Posterior vena cava (tissue), 2 donors: ENCODE measurements at regions of chr5 and their contacts with region 1.

Region 1: DNA sequence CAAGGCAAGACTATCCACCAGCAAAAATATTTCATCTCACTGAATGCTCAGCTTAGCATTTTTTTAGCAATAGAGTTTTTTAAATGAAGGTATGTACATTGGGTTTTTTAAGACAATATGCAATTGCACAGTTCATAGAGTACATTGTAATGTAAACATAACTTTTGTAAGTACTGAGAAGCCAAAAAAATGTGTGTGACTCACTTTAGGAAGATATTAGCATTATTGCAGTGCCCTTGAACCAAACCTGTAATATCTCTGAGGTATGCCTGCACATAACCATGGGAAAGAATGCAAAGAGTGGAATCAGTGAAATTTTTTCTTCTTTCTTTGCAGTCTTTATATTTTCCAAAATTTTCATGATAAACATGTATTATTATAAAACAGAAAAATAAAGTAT is 1533.3 kb upstream of the WWC1 start:
- DNase-seq: no peak

Region 2: DNA sequence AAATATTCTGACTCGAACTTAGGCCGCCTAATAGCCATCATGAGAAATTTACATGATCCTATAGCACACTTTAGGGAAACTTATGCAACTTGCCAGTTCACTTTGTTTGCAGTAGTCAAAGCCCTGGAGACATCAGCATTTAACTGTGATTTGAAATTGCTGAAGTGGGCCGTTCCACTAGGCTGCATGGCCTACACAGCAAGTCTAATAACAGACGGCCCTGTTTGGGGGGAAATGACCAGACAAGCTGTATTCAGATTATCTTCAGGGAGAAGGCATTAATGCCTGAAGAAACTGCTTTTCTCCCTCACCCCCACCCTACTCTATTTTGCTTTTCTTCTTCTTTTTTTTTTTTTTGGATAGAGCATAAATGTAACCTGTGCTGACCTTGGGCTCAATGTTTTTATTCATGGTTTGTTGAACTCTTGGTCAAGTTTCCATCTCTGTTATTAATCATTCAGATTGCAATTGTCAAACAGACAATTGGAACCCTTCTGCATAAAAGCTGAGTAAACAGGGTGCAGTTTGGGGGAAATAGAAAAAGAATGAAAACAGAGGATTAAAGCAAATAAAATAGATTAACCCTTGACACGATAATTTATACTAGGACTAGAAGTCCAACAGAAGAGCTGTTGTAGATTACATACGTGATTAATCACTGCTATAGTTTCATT is 394.9 kb before region 1 on chr5:
- intact Hi-C with region 1: loop called in 1 of 2 experiments (anchors 5 kb)
- DNase-seq: no peak

Region 3: DNA sequence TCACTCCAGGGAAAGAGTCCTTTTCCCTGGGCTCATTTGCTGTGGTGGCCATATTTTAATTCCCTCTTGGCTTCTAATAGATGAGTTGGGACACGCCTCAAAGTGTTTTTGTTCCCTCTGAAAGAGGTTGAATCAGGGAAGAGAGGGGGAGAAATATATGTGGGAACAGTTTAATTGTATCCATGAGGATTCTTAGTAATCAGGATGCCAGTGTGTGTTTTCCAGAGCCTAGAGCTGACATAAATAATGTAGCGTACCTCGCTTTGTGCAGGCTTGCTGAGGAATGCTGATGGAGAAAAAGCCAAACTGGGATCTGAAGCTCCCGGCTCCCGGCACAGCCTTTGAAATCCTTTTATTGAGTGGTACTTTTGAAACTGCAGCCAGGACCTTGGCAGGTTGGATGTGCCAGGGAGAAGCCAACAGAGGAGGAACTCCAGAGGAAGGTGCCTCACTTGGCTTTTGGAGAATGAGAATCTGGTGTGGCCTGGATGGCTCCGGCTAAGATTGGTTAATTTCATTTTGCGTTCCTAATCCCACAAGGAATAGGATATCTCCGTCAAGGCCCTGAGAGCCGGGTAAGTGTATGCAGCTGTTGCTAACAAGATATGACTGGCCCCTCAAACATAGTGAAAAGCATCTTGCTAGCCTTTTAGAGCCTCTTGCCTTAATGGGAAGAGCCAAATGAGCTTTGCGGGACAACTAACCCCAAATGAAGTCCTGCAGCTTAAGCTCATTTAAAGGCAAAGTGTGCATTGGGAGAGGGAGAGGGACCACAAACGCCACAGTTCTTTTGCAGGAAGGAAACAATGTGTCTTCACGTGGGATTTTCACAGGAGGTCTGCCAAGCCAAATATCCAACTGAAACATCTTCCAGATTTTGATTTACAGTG is 1062.2 kb after region 1 on chr5:
- intact Hi-C with region 1: loop called in 1 of 2 experiments (anchors 5 kb)
- DNase-seq: no peak